Colonic mucosa (tissue), 4 donors: ENCODE measurements at regions of chr9 and their contacts with region 1.

Region 1: DNA sequence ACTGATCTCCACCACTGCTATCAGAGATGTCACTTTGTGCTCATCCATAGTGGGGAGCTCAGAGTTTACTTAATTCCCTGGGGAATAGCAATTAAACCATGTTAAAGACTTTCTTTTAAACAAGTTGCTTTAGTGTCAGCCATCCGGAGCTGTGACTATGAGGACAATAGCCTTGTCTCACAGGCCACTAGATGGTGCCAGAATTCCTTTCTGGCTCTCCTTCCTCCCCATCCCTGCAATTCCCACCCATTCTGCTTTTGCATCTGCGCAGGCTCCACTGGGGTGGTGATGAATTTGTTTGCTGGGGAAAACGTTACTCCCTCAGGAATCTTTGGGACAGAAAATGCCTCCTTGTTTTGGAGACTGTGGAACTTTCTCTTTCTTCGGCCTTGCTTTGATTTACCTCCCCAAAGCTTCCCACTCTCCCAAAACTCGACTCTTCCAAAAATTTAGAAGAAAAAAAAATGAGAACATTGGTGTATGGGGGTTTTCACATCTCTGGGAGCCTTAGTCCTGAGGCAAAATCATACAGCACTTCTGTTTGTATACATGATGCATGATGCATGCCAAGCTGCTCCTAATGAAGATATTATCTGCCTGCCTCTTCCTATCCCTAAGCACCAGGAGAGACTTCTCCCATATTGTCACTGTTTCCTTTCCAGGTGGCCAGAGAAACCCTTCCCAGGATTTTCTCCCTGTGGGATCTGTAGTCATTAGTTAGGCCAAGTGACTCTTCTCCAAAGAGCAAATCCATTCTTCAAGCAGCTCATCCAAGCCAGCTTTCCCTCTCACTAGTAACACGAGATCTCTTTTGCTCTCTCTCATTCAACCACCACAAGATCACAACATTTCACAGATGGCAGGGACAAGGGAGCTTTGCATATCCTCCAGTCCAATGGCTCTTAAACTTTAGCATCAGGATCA is 466.1 kb downstream of the TLR4 start:
- DNase-seq: peak; percentile 24
- H3K4me3 ChIP-seq: no peak overlapping the region
- H3K27ac ChIP-seq: no peak overlapping the region
- H3K4me1 ChIP-seq: no peaks in the 10 kb centered on the region
- H3K27me3 ChIP-seq: no peaks in the 10 kb centered on the region
- CTCF ChIP-seq: peak; percentile 57

Region 2: DNA sequence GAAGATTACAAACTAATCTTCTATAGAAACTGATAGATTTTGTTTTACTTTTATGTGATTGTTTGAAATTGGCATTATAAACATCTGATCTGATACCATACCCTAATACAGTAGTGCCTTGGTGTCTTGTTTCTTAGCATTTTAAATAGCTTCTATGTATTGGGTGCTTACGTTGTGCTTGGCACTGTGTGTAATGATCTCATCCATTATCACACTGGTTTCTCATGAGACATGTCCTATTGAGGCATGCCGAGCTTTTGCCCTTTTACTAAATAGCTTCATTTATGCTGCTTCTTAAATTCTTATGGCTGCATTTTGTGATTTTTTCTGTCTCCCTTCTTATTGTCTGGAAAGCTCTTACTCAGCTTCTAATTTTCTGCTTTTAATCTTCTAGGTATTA is 514.3 kb before region 1 on chr9:
- intact Hi-C with region 1: no loop called
- DNase-seq: no peak
- H3K4me3 ChIP-seq: no peak overlapping the region
- H3K27ac ChIP-seq: no peak overlapping the region
- H3K4me1 ChIP-seq: peaks cover 4% of the 10 kb centered on the region
- H3K27me3 ChIP-seq: no peaks in the 10 kb centered on the region
- CTCF ChIP-seq: no peak

Region 3: DNA sequence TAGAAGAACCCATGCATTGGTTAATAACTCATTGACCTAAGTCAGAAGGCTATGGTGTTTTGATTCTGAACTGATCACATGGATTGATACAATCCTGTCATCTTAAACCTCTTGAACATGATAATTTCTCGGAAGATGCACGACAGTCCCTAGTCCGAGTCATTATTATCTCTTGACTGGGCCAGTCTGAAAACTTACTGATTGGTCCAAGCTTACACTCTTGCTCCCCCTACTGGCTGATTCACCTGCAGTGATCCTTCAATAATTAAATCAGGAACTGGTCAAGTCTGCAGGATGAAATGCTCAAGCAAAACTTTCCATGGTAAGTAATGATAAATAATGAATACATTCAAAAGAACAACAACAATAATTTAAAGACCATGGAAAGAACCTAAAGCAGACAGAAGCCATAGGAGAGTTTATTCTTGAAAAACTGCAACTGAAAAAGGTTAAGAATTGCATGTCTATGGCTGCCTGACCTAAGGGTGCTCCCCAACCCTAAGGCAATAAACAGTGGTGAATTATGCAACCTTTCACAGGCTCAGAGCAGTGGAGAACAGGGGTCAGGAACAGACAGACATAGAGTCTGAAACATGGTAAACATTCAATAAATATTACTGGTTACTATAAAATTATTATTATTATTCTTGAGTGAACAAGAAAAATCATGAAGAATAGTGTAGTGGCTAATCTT is 1119.6 kb after region 1 on chr9:
- intact Hi-C with region 1: loop called (anchors 5 kb)
- DNase-seq: peak; percentile 57
- H3K4me3 ChIP-seq: no peak overlapping the region
- H3K27ac ChIP-seq: no peak overlapping the region
- H3K4me1 ChIP-seq: no peaks in the 10 kb centered on the region
- H3K27me3 ChIP-seq: no peaks in the 10 kb centered on the region
- CTCF ChIP-seq: peak; percentile 52

Region 4: GRCh38 chr9:119360237-119360636 is 1189.9 kb after region 1 on chr9:
- intact Hi-C with region 1: loop called (anchors 5 kb)
- DNase-seq: no peak
- H3K4me3 ChIP-seq: no peak overlapping the region
- H3K27ac ChIP-seq: no peak overlapping the region
- H3K4me1 ChIP-seq: no peaks in the 10 kb centered on the region
- H3K27me3 ChIP-seq: no peaks in the 10 kb centered on the region
- CTCF ChIP-seq: no peak